ENCODE measurements at regions of chr13 and their contacts with region 1.

Region 1: DNA sequence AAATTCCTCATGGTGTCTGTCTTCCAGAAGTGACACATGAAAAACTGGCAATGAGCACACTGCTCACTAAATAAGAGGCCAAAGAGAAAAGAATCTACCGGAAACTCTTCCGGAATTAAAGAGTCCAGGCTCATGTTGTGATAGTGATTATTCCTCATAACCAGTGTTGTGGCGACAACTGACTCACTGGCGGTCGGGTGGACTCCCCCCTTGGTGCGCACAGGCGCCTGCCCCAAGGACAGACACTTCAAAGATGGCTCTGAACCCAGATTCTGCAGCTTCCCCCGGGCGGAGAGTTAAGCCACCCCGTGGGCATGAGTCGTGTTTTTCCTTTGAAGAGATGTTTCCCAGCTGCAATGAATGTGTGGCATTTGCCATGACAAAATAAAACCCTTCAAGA is 10.3 kb downstream of the IL17D start:
- DNase-seq: peak in 1 of 2 donors; percentile 42
- ATAC-seq: no peak
- H3K4me3 ChIP-seq: peak overlapping the region in 3 of 4 donors; percentile 38 to 56 (median 47)
- H3K27ac ChIP-seq: peak overlapping the region; percentile 80 to 89 (median 88)
- H3K4me1 ChIP-seq: peaks cover 46 to 56% of the 10 kb centered on the region in 2 donors
- H3K27me3 ChIP-seq: no peaks in the 10 kb centered on the region
- CTCF ChIP-seq: no peak
- POLR2A ChIP-seq: peak in 1 of 2 donors; percentile 13

Region 2: GRCh38 chr13:20828539-20829364 is 115.0 kb after region 1 on chr13:
- in situ Hi-C with region 1: loop called (anchors 5 kb)
- intact Hi-C with region 1: loop called (anchors 1 kb)
- DNase-seq: no peak
- ATAC-seq: peak; percentile 33 to 50
- H3K4me3 ChIP-seq: peak overlapping the region; percentile 35 to 63 (median 49)
- H3K27ac ChIP-seq: peak overlapping the region; percentile 87 to 93 (median 88)
- H3K4me1 ChIP-seq: peaks cover 73 to 79% of the 10 kb centered on the region in 2 donors
- H3K27me3 ChIP-seq: no peaks in the 10 kb centered on the region
- CTCF ChIP-seq: peak; percentile 78 to 85 (median 84)
- POLR2A ChIP-seq: no peak

Region 3: GRCh38 chr13:20869542-20869941 is 155.8 kb after region 1 on chr13:
- in situ Hi-C with region 1: no loop called
- intact Hi-C with region 1: loop called (anchors 2 kb)
- DNase-seq: no peak
- ATAC-seq: peak in 1 of 2 donors; percentile 50
- H3K4me3 ChIP-seq: no peak overlapping the region
- H3K27ac ChIP-seq: no peak overlapping the region
- H3K4me1 ChIP-seq: peaks cover 20 to 30% of the 10 kb centered on the region in 2 donors
- H3K27me3 ChIP-seq: no peaks in the 10 kb centered on the region
- CTCF ChIP-seq: peak in 3 of 5 experiments; percentile 9 to 30 (median 11)
- POLR2A ChIP-seq: no peak

Region 4: DNA sequence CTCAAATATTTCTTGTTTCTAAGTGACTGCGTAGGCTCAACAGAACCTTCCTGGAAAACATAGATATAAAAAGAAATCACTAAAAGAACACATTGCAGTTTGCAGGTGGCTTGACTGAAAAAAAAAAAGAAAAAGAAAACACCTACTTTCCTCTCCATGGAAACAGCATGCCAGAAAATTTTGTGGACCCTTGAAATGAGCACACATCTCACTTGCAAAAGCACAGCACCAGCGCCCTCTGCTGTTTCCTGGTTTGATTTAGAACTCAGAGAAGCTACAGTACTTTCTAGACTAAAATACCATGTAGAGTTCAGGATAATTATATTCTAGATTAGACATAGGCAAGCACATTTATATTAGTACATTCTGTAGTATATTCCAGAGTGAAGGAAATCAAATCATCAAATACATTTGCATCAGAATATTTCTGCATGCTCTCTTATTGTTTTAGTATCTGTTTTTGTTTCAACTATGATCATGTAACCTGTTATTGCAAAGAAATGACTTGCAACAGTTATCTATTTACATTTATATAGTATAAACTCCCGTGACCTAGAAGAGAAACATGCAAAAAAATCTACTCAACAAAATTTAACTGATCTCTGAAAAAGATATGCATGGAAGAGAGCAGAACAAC is 211.1 kb after region 1 on chr13:
- in situ Hi-C with region 1: loop called (anchors 5 to 25 kb)
- intact Hi-C with region 1: loop called (anchors 2 kb)
- DNase-seq: peak; percentile 36 to 57
- ATAC-seq: peak in 1 of 2 donors; percentile 68
- H3K4me3 ChIP-seq: no peak overlapping the region
- H3K27ac ChIP-seq: no peak overlapping the region
- H3K4me1 ChIP-seq: no peaks in the 10 kb centered on the region
- H3K27me3 ChIP-seq: no peaks in the 10 kb centered on the region
- CTCF ChIP-seq: peak; percentile 43 to 84 (median 64)
- POLR2A ChIP-seq: no peak

Measured in gastrocnemius medialis (tissue), 4 donors.